Caco-2 (cell line): ENCODE measurements at regions of chr15 and their contacts with region 1.

Region 1: DNA sequence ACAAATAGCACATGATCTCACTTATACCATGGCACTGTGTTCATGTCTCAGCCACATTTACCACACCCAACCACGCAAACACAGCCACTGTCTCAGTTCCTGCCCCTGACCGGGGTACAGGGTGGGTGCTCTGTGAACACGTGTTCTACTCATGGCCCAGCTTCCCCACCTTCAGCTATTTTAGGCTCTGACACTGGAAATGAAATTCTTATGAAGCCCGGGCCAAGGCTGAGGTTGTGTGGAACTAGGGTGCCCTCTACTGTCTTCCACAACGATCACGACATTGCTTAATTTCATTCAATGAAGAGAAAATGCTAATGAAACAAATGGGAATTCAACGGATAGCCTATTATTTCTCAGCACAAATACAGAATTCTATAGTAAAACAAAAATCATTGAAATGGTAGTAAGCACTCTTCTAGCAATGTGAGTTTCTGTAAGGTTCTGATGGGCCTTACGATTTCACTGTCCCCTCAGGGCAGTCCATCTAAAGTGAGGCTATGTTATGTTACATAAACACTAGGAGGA is 2.1 kb upstream of the GABRA5 start:
- DNase-seq: peak in 1 of 2 experiments; percentile 48
- H3K4me3 ChIP-seq: no peak overlapping the region
- H3K4me3 Mint-ChIP-seq: no peak overlapping the region
- H3K27ac Mint-ChIP-seq: no peak overlapping the region
- H3K4me1 ChIP-seq: no peaks in the 10 kb centered on the region
- H3K4me1 Mint-ChIP-seq: no peaks in the 10 kb centered on the region
- H3K27me3 ChIP-seq: no peaks in the 10 kb centered on the region
- H3K27me3 Mint-ChIP-seq: no peaks in the 10 kb centered on the region
- CTCF ChIP-seq: peak; percentile 50 to 66

Region 2: GRCh38 chr15:26179906-26180305 is 684.8 kb before region 1 on chr15:
- CTCF ChIA-PET with region 1: no interaction called
- POLR2A ChIA-PET with region 1: no interaction called
- intact Hi-C with region 1: loop called (anchors 1 kb)
- DNase-seq: peak in 1 of 2 experiments; percentile 24
- H3K4me3 ChIP-seq: no peak overlapping the region
- H3K4me3 Mint-ChIP-seq: no peak overlapping the region
- H3K27ac Mint-ChIP-seq: no peak overlapping the region
- H3K4me1 ChIP-seq: no peaks in the 10 kb centered on the region
- H3K4me1 Mint-ChIP-seq: no peaks in the 10 kb centered on the region
- H3K27me3 ChIP-seq: no peaks in the 10 kb centered on the region
- H3K27me3 Mint-ChIP-seq: peaks cover 14% of the 10 kb centered on the region
- CTCF ChIP-seq: no peak

Region 3: GRCh38 chr15:26806144-26806543 is 58.6 kb before region 1 on chr15:
- CTCF ChIA-PET with region 1: no interaction called
- POLR2A ChIA-PET with region 1: no interaction called
- intact Hi-C with region 1: loop called (anchors 10 kb)
- DNase-seq: no peak
- H3K4me3 ChIP-seq: no peak overlapping the region
- H3K4me3 Mint-ChIP-seq: no peak overlapping the region
- H3K27ac Mint-ChIP-seq: no peak overlapping the region
- H3K4me1 ChIP-seq: no peaks in the 10 kb centered on the region
- H3K4me1 Mint-ChIP-seq: no peaks in the 10 kb centered on the region
- H3K27me3 ChIP-seq: no peaks in the 10 kb centered on the region
- H3K27me3 Mint-ChIP-seq: peaks cover 5% of the 10 kb centered on the region
- CTCF ChIP-seq: no peak

Region 4: DNA sequence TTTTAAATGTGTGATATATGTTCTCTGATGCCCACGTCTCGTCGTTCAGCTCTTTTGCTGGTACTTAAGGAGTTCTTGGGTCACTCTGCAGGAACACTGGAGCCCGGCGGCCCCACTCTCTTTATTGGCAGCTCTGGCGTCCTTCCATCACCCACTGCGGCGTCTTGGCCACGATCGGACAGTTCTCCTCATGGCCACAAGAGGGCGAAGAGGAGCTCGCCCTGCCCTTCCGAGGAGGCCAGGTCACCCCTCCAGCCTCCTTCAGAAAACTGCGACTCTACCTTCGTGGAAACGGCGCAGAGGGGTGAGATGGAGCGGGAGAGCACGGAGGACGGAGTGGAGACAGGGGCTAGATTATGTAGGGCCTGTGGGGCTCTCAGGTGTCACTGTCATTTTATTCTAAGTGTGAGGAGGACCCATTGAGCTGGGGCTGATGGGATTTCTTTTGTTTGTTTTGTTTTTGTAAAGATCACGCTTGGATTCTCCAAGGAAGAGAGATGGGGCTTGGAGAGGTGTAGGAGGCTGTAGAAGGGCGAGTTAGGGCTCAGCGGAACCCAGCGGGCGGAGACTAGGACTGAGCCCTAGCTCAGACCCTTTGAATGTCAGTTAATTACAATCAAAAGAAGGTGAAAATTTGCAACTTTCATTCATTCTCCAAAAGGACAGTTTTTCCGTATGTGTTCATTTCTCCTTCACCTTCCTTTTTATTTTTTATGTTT is 25.8 kb before region 1 on chr15:
- CTCF ChIA-PET with region 1: interaction called, 3 read pairs
- POLR2A ChIA-PET with region 1: no interaction called
- intact Hi-C with region 1: loop called (anchors 1 kb)
- DNase-seq: peak in 1 of 2 experiments; percentile 34
- H3K4me3 ChIP-seq: no peak overlapping the region
- H3K4me3 Mint-ChIP-seq: no peak overlapping the region
- H3K27ac Mint-ChIP-seq: no peak overlapping the region
- H3K4me1 ChIP-seq: no peaks in the 10 kb centered on the region
- H3K4me1 Mint-ChIP-seq: no peaks in the 10 kb centered on the region
- H3K27me3 ChIP-seq: no peaks in the 10 kb centered on the region
- H3K27me3 Mint-ChIP-seq: peaks cover 4% of the 10 kb centered on the region
- CTCF ChIP-seq: peak; percentile 30 to 60

Region 5: GRCh38 chr15:27039152-27039551 is 174.4 kb after region 1 on chr15:
- CTCF ChIA-PET with region 1: no interaction called
- POLR2A ChIA-PET with region 1: no interaction called
- intact Hi-C with region 1: no loop called
- DNase-seq: no peak
- H3K4me3 ChIP-seq: no peak overlapping the region
- H3K4me3 Mint-ChIP-seq: no peak overlapping the region
- H3K27ac Mint-ChIP-seq: no peak overlapping the region
- H3K4me1 ChIP-seq: no peaks in the 10 kb centered on the region
- H3K4me1 Mint-ChIP-seq: no peaks in the 10 kb centered on the region
- H3K27me3 ChIP-seq: no peaks in the 10 kb centered on the region
- H3K27me3 Mint-ChIP-seq: peaks cover 22% of the 10 kb centered on the region
- CTCF ChIP-seq: no peak